H1 (cell line): ENCODE measurements at regions of chr3 and their contacts with region 1.

Region 1: GRCh38 chr3:184659797-184660306 is 52.0 kb downstream of the MAGEF1 start:
- DNase-seq: no peak
- H3K4me3 ChIP-seq: no peak overlapping the region
- H3K27ac ChIP-seq: no peak overlapping the region
- H3K4me1 ChIP-seq: peaks cover 14 to 45% (median 26%) of the 10 kb centered on the region in 4 experiments
- H3K27me3 ChIP-seq: no peaks in the 10 kb centered on the region; a peak in 1 of 7 replicates
- CTCF ChIP-seq: no peak
- EP300 ChIP-seq: no peak
- POLR2A ChIP-seq: no peak
- RAD21 ChIP-seq: peak in 1 of 2 experiments; percentile 18; a peak in 1 of 4 replicates

Region 2: GRCh38 chr3:184672977-184673870 is 13.4 kb after region 1 on chr3:
- CTCF ChIA-PET with region 1: interaction called, 33 read pairs
- POLR2A ChIA-PET with region 1: interaction called, 4 read pairs
- DNase-seq: no peak
- H3K4me3 ChIP-seq: no peak overlapping the region
- H3K27ac ChIP-seq: no peak overlapping the region
- H3K4me1 ChIP-seq: 0 out of 7 replicates have a peak, but pooled peaks cover 0 to under 1% (median 0%) of the 10 kb centered on the region in 4 experiments
- H3K27me3 ChIP-seq: 0 out of 7 replicates have a peak, but pooled peaks cover 0 to 2% (median 0%) of the 10 kb centered on the region in 4 experiments
- CTCF ChIP-seq: no peak
- EP300 ChIP-seq: no peak
- POLR2A ChIP-seq: no peak
- RAD21 ChIP-seq: no peak

Region 3: GRCh38 chr3:185070491-185071286 is 410.8 kb after region 1 on chr3:
- CTCF ChIA-PET with region 1: no interaction called
- POLR2A ChIA-PET with region 1: no interaction called
- DNase-seq: peak in 1 of 2 experiments; percentile 64
- H3K4me3 ChIP-seq: no peak overlapping the region
- H3K27ac ChIP-seq: no peak overlapping the region
- H3K4me1 ChIP-seq: peaks cover 0 to 12% (median 6%) of the 10 kb centered on the region in 4 experiments; a peak in 6 of 7 replicates
- H3K27me3 ChIP-seq: no peaks in the 10 kb centered on the region
- CTCF ChIP-seq: peak; percentile 67 to 80 (median 75)
- EP300 ChIP-seq: no peak
- POLR2A ChIP-seq: no peak
- RAD21 ChIP-seq: peak; percentile 59 to 70